ENCODE measurements at regions of chr2 and their contacts with region 1.

Region 1: GRCh38 chr2:65432227-65433190 is at the start of gene SPRED2:
- DNase-seq: peak; percentile 87
- ATAC-seq: peak; percentile 50
- H3K4me3 Mint-ChIP-seq: peak within 1 kb of the TSS; percentile 85
- H3K27ac Mint-ChIP-seq: peak within 1 kb of the TSS; percentile 73
- H3K4me1 Mint-ChIP-seq: peaks cover 16% of the 10 kb centered on the region
- H3K27me3 Mint-ChIP-seq: peaks cover 23% of the 10 kb centered on the region
- total RNA-seq, gene SPRED2: 6.7 to 7.9 TPM

Region 2: GRCh38 chr2:65056215-65057053 is 376.1 kb before region 1 on chr2 and contains the start of gene CEP68:
- CTCF ChIA-PET with region 1: interaction called, 3 read pairs
- POLR2A ChIA-PET with region 1: no interaction called
- intact Hi-C with region 1: loop called (anchors 2 to 5 kb)
- DNase-seq: peak; percentile 98
- ATAC-seq: peak; percentile 94
- H3K4me3 Mint-ChIP-seq: peak within 1 kb of the TSS; percentile 93
- H3K27ac Mint-ChIP-seq: peak within 1 kb of the TSS; percentile 84
- H3K4me1 Mint-ChIP-seq: peaks cover 55% of the 10 kb centered on the region
- H3K27me3 Mint-ChIP-seq: no peaks in the 10 kb centered on the region
- total RNA-seq, gene CEP68: 4.9 to 6.0 TPM

Region 3: DNA sequence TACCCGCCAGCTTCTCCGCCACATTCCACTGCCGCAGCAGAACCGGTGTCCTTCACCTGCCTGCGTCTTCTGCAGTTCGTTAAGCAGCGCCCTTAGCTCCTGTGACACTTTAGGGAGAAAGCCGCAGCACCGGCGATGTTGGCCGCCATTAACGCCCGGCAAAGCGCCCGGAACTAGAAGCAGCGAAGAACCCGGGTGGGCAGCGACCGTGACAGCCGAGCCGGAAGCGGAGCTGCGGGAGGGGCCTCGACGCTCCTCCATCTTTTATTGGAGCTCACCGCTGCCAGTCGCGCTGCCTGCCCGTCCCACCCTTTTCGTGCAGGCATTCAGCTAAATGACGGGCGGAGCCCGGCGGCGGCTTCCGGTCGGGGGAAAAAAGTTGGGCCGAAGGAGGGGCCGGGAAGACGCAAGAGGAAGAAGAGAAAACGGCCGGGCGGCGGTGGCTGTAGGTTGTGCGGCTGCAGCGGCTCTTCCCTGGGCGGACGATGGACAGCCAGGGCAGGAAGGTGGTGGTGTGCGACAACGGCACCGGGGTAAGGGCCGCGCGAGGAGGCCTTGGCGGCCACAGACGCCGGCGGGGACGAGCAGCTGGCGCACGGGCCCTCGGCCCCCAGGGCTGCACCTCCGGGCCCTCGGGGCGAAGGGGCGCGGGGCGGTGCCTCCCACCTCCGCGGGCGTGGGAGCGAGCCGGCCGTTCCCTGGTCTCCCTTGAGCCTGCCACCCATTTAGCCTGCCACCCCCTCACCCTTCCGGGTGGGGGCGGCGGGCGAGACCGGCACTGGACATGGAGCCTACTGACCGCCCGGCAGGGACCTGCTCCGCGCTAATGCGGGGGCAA is 204.9 kb before region 1 on chr2 and contains the start of gene ACTR2:
- CTCF ChIA-PET with region 1: no interaction called
- POLR2A ChIA-PET with region 1: interaction called, 7 read pairs
- intact Hi-C with region 1: loop called (anchors 1 to 2 kb)
- DNase-seq: peak; percentile 97
- ATAC-seq: peak; percentile 96
- H3K4me3 Mint-ChIP-seq: peak within 1 kb of the TSS; percentile 95
- H3K27ac Mint-ChIP-seq: peak within 1 kb of the TSS; percentile 98
- H3K4me1 Mint-ChIP-seq: peaks cover 30% of the 10 kb centered on the region
- H3K27me3 Mint-ChIP-seq: no peaks in the 10 kb centered on the region
- total RNA-seq, gene ACTR2: 326 to 388 TPM

Region 4: GRCh38 chr2:65357095-65357958 is 75.2 kb before region 1 on chr2:
- CTCF ChIA-PET with region 1: no interaction called
- POLR2A ChIA-PET with region 1: interaction called, 3 read pairs
- intact Hi-C with region 1: loop called in 1 of 2 experiments (anchors 2 kb)
- DNase-seq: peak; percentile 38
- ATAC-seq: peak; percentile 77
- H3K4me3 Mint-ChIP-seq: no peak overlapping the region
- H3K27ac Mint-ChIP-seq: no peak overlapping the region
- H3K4me1 Mint-ChIP-seq: peaks cover 26% of the 10 kb centered on the region
- H3K27me3 Mint-ChIP-seq: peaks cover 5% of the 10 kb centered on the region

Region 5: DNA sequence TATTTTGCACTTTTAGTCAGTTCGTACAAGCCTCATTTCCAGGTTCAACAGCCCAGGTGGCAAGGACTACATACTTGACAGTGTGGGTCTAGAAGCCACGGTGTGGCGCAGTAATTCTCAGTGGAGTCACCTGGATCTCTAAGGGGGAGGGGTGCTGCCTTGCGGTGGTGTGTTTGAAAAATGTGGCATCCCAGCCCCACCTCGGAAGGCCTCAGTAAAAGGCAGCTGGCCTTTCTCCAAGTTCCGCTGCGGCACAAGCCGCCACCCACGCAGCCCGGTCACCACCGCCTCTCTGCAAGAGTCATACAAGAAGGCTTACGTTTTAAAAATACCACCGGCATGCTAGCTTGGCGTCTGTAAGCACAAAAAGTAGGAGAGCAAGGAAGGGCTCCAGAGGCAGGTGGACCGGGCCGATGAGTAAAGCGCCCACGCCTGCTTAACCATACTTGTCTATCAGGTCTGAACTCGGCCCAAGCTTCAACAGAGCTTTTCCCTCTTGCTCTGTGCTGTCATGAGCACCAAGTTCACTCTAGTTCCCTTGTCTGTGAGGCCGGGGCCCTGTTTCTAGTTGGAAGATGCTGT is 49.6 kb before region 1 on chr2:
- CTCF ChIA-PET with region 1: interaction called, 6 read pairs
- POLR2A ChIA-PET with region 1: no interaction called
- intact Hi-C with region 1: loop called (anchors 1 to 2 kb)
- DNase-seq: peak; percentile 95
- ATAC-seq: peak; percentile 90
- H3K4me3 Mint-ChIP-seq: peak overlapping the region; percentile 26
- H3K27ac Mint-ChIP-seq: peak overlapping the region; percentile 33
- H3K4me1 Mint-ChIP-seq: peaks cover 32% of the 10 kb centered on the region
- H3K27me3 Mint-ChIP-seq: peaks cover 13% of the 10 kb centered on the region

Region 6: GRCh38 chr2:67397143-67397986 is 1964.9 kb after region 1 on chr2 and contains the start of gene ETAA1:
- CTCF ChIA-PET with region 1: no interaction called
- POLR2A ChIA-PET with region 1: no interaction called
- intact Hi-C with region 1: loop called in 1 of 2 experiments (anchors 5 kb)
- DNase-seq: peak; percentile 96
- ATAC-seq: peak; percentile 100
- H3K4me3 Mint-ChIP-seq: peak within 1 kb of the TSS; percentile 98
- H3K27ac Mint-ChIP-seq: peak within 1 kb of the TSS; percentile 99
- H3K4me1 Mint-ChIP-seq: peaks cover 12% of the 10 kb centered on the region
- H3K27me3 Mint-ChIP-seq: no peaks in the 10 kb centered on the region
- total RNA-seq, gene ETAA1: 13.7 to 17.1 TPM

Measured in activated CD4-positive, alpha-beta T cell treated with anti-CD3 and anti-CD28 coated beads for 36 hours (primary cell).